Activated T-helper 1 cell treated with anti-CD3 and anti-CD28 coated beads, Interleukin-12 subunit alpha, Interleukin-12 subunit beta, Interleukin-2, Interleukin-4 antibody, amounts not matched to agents 30 ng/mL and 10 ng/mL and 1 ng/mL, durations not matched to agents 14 hours and 24 hours and 36 hours (primary cell): ENCODE measurements at regions of chr6 and their contacts with region 1.

Region 1: GRCh38 chr6:136289579-136290409 is at the start of gene BCLAF1:
- DNase-seq: peak; percentile 100
- H3K4me3 Mint-ChIP-seq: peak within 1 kb of the TSS; percentile 98
- H3K27ac Mint-ChIP-seq: peak within 1 kb of the TSS; percentile 99
- H3K4me1 Mint-ChIP-seq: peaks cover 48% of the 10 kb centered on the region
- H3K27me3 Mint-ChIP-seq: peaks cover 2% of the 10 kb centered on the region
- total RNA-seq, gene BCLAF1: 233 and 237 TPM in 2 replicates

Region 2: GRCh38 chr6:136249811-136250685 is 39.7 kb before region 1 on chr6 and contains the start of gene MTFR2:
- intact Hi-C with region 1: loop called (anchors 1 kb)
- DNase-seq: peak; percentile 95
- H3K4me3 Mint-ChIP-seq: peak within 1 kb of the TSS; percentile 98
- H3K27ac Mint-ChIP-seq: peak within 1 kb of the TSS; percentile 92
- H3K4me1 Mint-ChIP-seq: peaks cover 66% of the 10 kb centered on the region
- H3K27me3 Mint-ChIP-seq: no peaks in the 10 kb centered on the region
- total RNA-seq, gene MTFR2: 23.3 and 27.6 TPM in 2 replicates

Region 3: DNA sequence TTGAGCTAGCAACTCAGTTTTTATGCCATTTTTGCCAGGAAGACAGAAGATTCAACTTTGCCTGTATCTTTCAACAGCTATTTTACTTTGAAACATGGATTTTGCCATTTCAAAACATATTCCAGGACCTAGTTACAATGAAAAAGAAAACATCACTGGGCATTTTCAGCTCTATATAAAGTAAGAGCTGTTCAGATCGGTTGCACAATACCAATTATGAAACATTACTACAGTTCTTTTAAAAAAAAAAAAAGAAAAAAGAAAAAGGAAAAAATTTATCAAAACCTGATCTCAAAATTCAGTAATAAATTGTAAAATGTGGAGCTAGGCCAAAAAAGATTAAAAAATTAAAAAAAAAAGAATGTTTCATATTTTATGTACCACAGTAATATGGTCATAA is 15.7 kb before region 1 on chr6:
- intact Hi-C with region 1: loop called (anchors 2 kb)
- DNase-seq: no peak
- H3K4me3 Mint-ChIP-seq: no peak overlapping the region
- H3K27ac Mint-ChIP-seq: no peak overlapping the region
- H3K4me1 Mint-ChIP-seq: peaks cover 37% of the 10 kb centered on the region
- H3K27me3 Mint-ChIP-seq: no peaks in the 10 kb centered on the region

Region 4: GRCh38 chr6:136317021-136317694 is 27.4 kb after region 1 on chr6:
- intact Hi-C with region 1: loop called (anchors 1 kb)
- DNase-seq: peak; percentile 41
- H3K4me3 Mint-ChIP-seq: no peak overlapping the region
- H3K27ac Mint-ChIP-seq: no peak overlapping the region
- H3K4me1 Mint-ChIP-seq: no peaks in the 10 kb centered on the region
- H3K27me3 Mint-ChIP-seq: peaks cover 9% of the 10 kb centered on the region

Region 5: GRCh38 chr6:136403166-136403980 is 113.6 kb after region 1 on chr6:
- intact Hi-C with region 1: no loop called
- DNase-seq: no peak
- H3K4me3 Mint-ChIP-seq: no peak overlapping the region
- H3K27ac Mint-ChIP-seq: no peak overlapping the region
- H3K4me1 Mint-ChIP-seq: no peaks in the 10 kb centered on the region
- H3K27me3 Mint-ChIP-seq: peaks cover 3% of the 10 kb centered on the region

Region 6: GRCh38 chr6:136550330-136551071 is 260.7 kb after region 1 on chr6 and contains the start of gene MAP7:
- intact Hi-C with region 1: loop called (anchors 1 kb)
- DNase-seq: peak; percentile 53
- H3K4me3 Mint-ChIP-seq: peak within 1 kb of the TSS; percentile 74
- H3K27ac Mint-ChIP-seq: no peak within 1 kb of the TSS
- H3K4me1 Mint-ChIP-seq: peaks cover 15% of the 10 kb centered on the region
- H3K27me3 Mint-ChIP-seq: peaks cover 48% of the 10 kb centered on the region
- total RNA-seq, gene MAP7: 1.7 and 2.3 TPM in 2 replicates

Region 7: DNA sequence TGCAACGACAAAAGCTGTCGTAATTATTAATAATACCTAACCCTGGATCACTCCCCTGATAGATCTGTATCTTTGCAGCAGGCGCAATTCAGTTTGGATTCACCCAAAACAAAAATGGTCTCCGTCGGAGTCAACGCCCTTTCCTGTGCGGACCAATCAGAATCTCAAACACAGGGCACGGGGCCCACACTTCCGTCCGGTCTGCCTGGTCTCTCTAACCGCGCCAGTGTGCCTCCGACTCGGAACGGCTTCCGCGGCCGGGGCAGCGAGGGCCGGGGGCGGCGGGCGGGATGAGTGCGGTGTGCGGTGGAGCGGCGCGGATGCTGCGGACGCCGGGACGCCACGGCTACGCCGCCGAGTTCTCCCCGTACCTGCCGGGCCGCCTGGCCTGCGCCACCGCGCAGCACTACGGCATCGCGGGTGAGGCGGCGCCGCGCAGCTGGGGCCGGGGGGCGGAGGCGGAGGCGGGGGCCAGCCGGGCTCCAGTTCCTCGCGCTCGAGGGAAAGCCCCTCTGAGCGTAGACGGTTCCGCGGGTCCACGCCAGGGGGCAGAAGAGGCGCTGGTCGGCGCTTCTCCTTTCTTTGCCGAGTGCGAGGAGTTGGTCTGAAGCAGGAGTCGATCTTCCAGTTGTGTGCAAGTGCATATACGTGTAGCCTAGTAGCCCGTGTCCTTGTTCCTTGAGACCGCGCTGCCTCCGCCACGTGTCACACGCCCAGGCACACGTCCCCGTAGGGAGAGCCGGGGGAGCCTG is 532.8 kb after region 1 on chr6 and contains the start of gene PEX7:
- intact Hi-C with region 1: loop called (anchors 1 kb)
- DNase-seq: peak; percentile 85
- H3K4me3 Mint-ChIP-seq: peak within 1 kb of the TSS; percentile 91
- H3K27ac Mint-ChIP-seq: peak within 1 kb of the TSS; percentile 92
- H3K4me1 Mint-ChIP-seq: peaks cover 12% of the 10 kb centered on the region
- H3K27me3 Mint-ChIP-seq: peaks cover 6% of the 10 kb centered on the region
- total RNA-seq, gene PEX7: 3.7 and 4.2 TPM in 2 replicates